HCT116 (cell line): ENCODE measurements at regions of chr14 and their contacts with region 1.

Region 1: DNA sequence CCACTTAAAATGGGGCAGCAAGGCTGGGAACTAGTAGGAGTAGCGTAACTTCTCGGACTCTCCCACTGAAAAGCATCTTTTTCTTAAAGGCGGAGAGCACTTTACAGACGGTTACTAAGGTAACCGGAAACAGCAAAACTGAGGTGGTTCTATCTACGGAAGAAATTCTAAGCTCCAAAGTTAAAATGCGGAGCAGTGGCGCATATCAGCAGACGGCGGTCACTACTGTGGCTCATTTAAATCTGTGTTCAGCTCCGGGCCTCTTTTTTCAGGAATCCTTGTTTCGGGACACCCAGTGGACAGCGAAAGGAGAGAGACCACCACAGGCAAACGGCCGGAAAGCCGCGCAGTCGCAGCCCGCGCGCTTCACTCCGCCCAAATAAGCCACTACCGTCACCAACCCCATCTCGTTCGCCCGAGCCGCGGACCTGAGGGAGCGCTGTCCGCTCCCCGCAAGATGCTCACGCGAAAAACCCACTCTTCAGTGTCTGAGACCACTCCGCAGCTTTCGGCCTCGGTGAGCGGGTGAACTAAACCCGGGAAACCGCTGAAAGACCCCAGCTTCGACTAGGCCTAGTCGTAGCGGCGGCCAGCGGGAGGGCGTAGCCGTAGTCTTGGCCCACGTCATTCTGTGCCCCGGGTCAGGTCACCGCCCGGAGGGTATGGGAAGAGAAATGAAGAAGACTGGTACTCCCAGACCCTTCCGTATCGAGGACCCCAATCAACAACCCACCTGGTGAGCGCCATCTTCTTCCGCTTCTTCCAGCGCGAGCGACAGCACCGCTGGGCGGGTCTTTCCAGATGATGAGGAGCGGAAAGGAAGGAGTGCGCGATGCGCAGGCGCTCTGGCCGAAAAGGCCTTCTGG is at the start of gene SNW1:
- DNase-seq: peak; percentile 83
- ATAC-seq: peak; percentile 90
- H3K4me3 ChIP-seq: peak within 1 kb of the TSS; percentile 70 to 92
- H3K27ac ChIP-seq: peak within 1 kb of the TSS; percentile 76
- H3K4me1 ChIP-seq: peaks cover 0 to 15% of the 10 kb centered on the region in 2 experiments; a peak in 3 of 4 replicates
- H3K27me3 ChIP-seq: no peaks in the 10 kb centered on the region
- CTCF ChIP-seq: no peak
- POLR2A ChIP-seq: peak; percentile 51
- RAD21 ChIP-seq: no peak
- total RNA-seq, gene SNW1: 102 TPM

Region 2: GRCh38 chr14:77799863-77800730 is 39.5 kb after region 1 on chr14 and contains the start of gene ADCK1:
- CTCF ChIA-PET with region 1: interaction called, 5 read pairs
- POLR2A ChIA-PET with region 1: no interaction called
- RAD21 ChIA-PET with region 1: no interaction called
- intact Hi-C with region 1: loop called (anchors 2 kb)
- DNase-seq: peak; percentile 60
- ATAC-seq: peak; percentile 87
- H3K4me3 ChIP-seq: peak within 1 kb of the TSS; percentile 70 to 71
- H3K27ac ChIP-seq: peak within 1 kb of the TSS; percentile 79
- H3K4me1 ChIP-seq: peaks cover 9 to 31% of the 10 kb centered on the region in 2 experiments
- H3K27me3 ChIP-seq: no peaks in the 10 kb centered on the region
- CTCF ChIP-seq: peak in 2 of 3 experiments; percentile 24 to 36; a peak in 3 of 6 replicates
- POLR2A ChIP-seq: peak; percentile 66
- RAD21 ChIP-seq: no peak
- total RNA-seq, gene ADCK1: 6.0 TPM